Activated CD4-positive, alpha-beta T cell treated with anti-CD3 and anti-CD28 coated beads, Interleukin-2, amount 10 ng/mL, durations not matched to agents 24 days and 14 days (primary cell): ENCODE measurements at regions of chr7 and their contacts with region 1.

Region 1: DNA sequence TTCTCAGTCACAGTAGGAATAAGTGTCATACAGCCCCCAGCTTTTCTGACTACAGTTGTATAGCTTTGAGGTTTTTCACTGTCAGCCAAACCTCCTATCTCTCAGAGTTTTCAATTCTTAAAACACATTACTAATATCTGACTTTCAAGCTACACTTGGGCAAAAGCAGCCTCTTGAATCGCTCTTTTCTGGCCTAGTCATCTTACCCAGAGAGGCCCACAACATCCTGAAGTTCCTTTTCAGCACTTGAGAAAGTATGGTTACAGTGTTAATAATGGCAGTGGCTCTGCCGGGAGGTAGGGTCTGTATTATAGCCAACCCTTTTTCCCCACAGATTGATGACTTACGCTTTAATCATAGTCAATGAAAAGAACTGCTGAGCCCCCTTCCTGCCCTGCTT is 181.0 kb downstream of the LRRC4 start:
- DNase-seq: no peak
- H3K4me3 Mint-ChIP-seq: no peak overlapping the region
- H3K27ac Mint-ChIP-seq: peak overlapping the region; percentile 91
- H3K4me1 Mint-ChIP-seq: peaks cover 35% of the 10 kb centered on the region
- H3K27me3 Mint-ChIP-seq: no peaks in the 10 kb centered on the region

Region 2: GRCh38 chr7:127751490-127752448 is 98.4 kb before region 1 on chr7:
- intact Hi-C with region 1: loop called (anchors 2 kb)
- DNase-seq: no peak
- H3K4me3 Mint-ChIP-seq: no peak overlapping the region
- H3K27ac Mint-ChIP-seq: peak overlapping the region; percentile 21
- H3K4me1 Mint-ChIP-seq: peaks cover 31% of the 10 kb centered on the region
- H3K27me3 Mint-ChIP-seq: no peaks in the 10 kb centered on the region

Region 3: GRCh38 chr7:127819975-127820731 is 30.0 kb before region 1 on chr7:
- intact Hi-C with region 1: loop called (anchors 1 kb)
- DNase-seq: no peak
- H3K4me3 Mint-ChIP-seq: peak overlapping the region; percentile 50
- H3K27ac Mint-ChIP-seq: peak overlapping the region; percentile 80
- H3K4me1 Mint-ChIP-seq: peaks cover 40% of the 10 kb centered on the region
- H3K27me3 Mint-ChIP-seq: no peaks in the 10 kb centered on the region

Region 4: GRCh38 chr7:127874951-127875608 is 24.9 kb after region 1 on chr7:
- intact Hi-C with region 1: loop called (anchors 1 kb)
- DNase-seq: no peak
- H3K4me3 Mint-ChIP-seq: no peak overlapping the region
- H3K27ac Mint-ChIP-seq: peak overlapping the region; percentile 50
- H3K4me1 Mint-ChIP-seq: peaks cover 25% of the 10 kb centered on the region
- H3K27me3 Mint-ChIP-seq: no peaks in the 10 kb centered on the region

Region 5: GRCh38 chr7:127983804-127984332 is 133.7 kb after region 1 on chr7:
- intact Hi-C with region 1: loop called (anchors 5 kb)
- DNase-seq: no peak
- H3K4me3 Mint-ChIP-seq: no peak overlapping the region
- H3K27ac Mint-ChIP-seq: peak overlapping the region; percentile 21
- H3K4me1 Mint-ChIP-seq: peaks cover 25% of the 10 kb centered on the region
- H3K27me3 Mint-ChIP-seq: no peaks in the 10 kb centered on the region